Left ventricle myocardium superior (tissue), 1 donor: ENCODE measurements at regions of chr17 and their contacts with region 1.

Region 1: DNA sequence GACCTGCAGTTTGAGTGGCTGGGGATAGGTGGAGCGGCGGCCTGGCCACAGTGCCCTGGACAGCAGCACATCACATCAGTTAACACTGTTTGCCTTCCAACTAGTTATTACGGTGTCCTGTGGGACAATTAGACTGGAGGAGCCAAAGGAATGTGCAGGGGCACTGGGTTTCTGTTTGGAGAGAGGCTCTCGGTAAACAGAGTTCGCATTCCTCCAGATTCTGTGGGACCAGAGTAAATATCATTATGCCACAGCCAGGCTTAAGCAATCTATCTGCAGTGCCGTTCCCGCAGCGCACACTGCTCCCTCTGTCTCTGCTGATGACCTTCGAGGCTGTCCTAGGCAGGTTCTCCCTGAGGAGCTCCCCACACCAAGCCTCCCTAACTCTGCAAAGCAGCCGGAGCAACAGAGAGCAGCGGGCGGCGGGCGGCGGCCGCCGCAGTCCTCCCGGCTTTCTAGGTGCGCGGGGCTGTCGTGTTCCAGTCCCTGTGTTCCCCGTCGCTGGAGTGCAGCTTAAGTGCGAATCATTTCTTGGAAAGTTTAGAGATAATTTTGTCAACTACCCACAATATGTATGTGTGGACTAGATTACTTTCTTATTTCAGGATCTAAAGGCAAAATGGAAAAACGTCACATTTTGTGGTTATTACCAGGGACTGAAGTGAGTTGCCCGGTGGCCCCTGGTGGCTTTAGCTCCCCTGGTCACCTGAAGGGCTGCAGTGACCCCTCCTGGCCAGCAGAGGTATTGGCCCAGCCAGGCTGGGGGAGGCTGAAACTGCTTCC is 43.2 kb downstream of the PGS1 start:
- DNase-seq: peak; percentile 84
- ATAC-seq: peak; percentile 77

Region 2: GRCh38 chr17:78289802-78290363 is 131.8 kb before region 1 on chr17:
- intact Hi-C with region 1: loop called (anchors 10 kb)
- DNase-seq: peak; percentile 78
- ATAC-seq: peak; percentile 89

Region 3: GRCh38 chr17:78383725-78384471 is 37.8 kb before region 1 on chr17:
- intact Hi-C with region 1: loop called (anchors 5 kb)
- DNase-seq: peak; percentile 78
- ATAC-seq: peak; percentile 54